ENCODE measurements at regions of chr18 and their contacts with region 1.

Region 1: GRCh38 chr18:77087393-77088141 is 45.0 kb downstream of the MBP start:
- DNase-seq: peak in 1 of 2 donors; percentile 71
- H3K4me3 ChIP-seq: peak overlapping the region; percentile 27 to 58
- H3K27ac ChIP-seq: peak overlapping the region; percentile 68 to 85
- H3K4me1 ChIP-seq: peaks cover 0 to 24% of the 10 kb centered on the region in 2 donors
- H3K27me3 ChIP-seq: no peaks in the 10 kb centered on the region
- CTCF ChIP-seq: no peak

Region 2: GRCh38 chr18:77101410-77102258 is 14.1 kb after region 1 on chr18:
- intact Hi-C with region 1: loop called (anchors 2 kb)
- DNase-seq: peak; percentile 84 to 94
- H3K4me3 ChIP-seq: peak overlapping the region in 1 of 2 donors; percentile 0
- H3K27ac ChIP-seq: peak overlapping the region; percentile 73 to 84
- H3K4me1 ChIP-seq: peaks cover 16 to 50% of the 10 kb centered on the region in 2 donors
- H3K27me3 ChIP-seq: no peaks in the 10 kb centered on the region
- CTCF ChIP-seq: no peak

Region 3: GRCh38 chr18:77249569-77250500 is 162.3 kb after region 1 on chr18 and contains the start of gene GALR1:
- intact Hi-C with region 1: no loop called
- DNase-seq: no peak
- H3K4me3 ChIP-seq: peak within 1 kb of the TSS; percentile 21 to 55
- H3K27ac ChIP-seq: no peak within 1 kb of the TSS
- H3K4me1 ChIP-seq: no peaks in the 10 kb centered on the region
- H3K27me3 ChIP-seq: peaks cover 9% of the 10 kb centered on the region
- CTCF ChIP-seq: no peak
- total RNA-seq, gene GALR1: not detected

Measured in ascending aorta (tissue), 2 donors.